ENCODE measurements at regions of chr1 and their contacts with region 1.

Region 1: DNA sequence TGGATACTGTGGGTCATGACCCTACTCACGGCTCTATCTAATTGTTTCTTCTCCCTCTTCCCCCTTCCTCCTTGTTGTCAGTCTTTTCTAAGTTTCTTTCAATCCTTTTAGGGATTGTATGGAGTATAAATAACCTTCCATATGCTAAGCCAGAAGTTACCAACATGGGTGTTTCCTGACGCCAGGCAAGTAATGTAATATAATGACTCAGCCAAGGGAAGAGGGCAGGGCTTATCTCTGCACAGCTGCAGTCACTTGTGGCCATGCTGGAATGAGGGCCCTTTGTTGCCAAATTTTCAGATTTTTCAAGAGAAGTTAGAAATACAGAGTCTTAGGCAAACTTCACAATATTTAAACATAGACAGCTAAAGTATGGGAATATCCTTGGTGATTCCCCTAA is 194.6 kb downstream of the ST6GALNAC3 start:
- DNase-seq: peak; percentile 47
- H3K4me3 Mint-ChIP-seq: no peak overlapping the region
- H3K27ac Mint-ChIP-seq: peak overlapping the region; percentile 69
- H3K4me1 Mint-ChIP-seq: peaks cover 60% of the 10 kb centered on the region
- H3K27me3 Mint-ChIP-seq: no peaks in the 10 kb centered on the region

Region 2: DNA sequence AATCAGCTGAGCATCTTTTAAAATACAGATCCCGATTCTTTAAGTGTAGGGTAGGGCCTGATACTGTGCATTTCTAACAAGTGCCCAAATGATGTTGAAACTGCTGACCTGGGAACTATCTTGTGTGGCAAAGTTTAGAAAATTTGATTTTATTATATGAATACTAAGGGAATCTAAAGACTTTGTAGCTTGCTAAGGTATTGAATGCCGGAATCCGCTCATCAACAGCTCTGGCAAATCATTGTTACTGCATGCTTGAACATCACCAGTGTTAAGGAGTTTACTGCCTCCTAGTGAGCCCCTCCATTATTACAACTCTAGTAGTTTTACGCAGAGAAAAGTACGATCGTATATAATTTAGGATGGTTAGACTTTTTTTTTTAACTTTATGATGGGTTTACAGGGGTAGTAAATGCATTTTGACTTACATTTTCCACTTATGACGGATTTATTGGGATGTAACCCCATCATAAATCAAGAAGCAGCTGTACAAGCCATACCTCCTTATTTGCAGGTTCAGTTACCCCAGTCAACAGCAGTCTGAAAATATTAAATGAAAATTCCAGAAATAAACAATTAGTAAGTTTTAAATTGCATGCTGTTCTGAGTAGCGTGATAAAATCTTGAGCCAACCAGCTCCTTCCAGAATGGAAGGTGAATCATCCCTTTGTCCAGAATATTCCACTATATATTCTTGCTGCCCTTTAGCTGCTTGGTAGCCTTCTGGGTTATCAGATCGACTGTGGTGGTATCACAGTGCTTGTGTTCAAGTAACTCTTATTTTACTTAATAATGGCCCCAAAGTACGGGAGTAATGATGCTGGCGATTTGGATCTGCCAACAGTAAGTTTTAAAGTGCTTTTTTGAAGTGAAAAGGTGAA is 1535.3 kb before region 1 on chr1:
- CTCF ChIA-PET with region 1: no interaction called
- intact Hi-C with region 1: no loop called
- DNase-seq: peak; percentile 49
- H3K4me3 Mint-ChIP-seq: peak overlapping the region; percentile 89
- H3K27ac Mint-ChIP-seq: peak overlapping the region; percentile 94
- H3K4me1 Mint-ChIP-seq: peaks cover 37% of the 10 kb centered on the region
- H3K27me3 Mint-ChIP-seq: no peaks in the 10 kb centered on the region

Region 3: DNA sequence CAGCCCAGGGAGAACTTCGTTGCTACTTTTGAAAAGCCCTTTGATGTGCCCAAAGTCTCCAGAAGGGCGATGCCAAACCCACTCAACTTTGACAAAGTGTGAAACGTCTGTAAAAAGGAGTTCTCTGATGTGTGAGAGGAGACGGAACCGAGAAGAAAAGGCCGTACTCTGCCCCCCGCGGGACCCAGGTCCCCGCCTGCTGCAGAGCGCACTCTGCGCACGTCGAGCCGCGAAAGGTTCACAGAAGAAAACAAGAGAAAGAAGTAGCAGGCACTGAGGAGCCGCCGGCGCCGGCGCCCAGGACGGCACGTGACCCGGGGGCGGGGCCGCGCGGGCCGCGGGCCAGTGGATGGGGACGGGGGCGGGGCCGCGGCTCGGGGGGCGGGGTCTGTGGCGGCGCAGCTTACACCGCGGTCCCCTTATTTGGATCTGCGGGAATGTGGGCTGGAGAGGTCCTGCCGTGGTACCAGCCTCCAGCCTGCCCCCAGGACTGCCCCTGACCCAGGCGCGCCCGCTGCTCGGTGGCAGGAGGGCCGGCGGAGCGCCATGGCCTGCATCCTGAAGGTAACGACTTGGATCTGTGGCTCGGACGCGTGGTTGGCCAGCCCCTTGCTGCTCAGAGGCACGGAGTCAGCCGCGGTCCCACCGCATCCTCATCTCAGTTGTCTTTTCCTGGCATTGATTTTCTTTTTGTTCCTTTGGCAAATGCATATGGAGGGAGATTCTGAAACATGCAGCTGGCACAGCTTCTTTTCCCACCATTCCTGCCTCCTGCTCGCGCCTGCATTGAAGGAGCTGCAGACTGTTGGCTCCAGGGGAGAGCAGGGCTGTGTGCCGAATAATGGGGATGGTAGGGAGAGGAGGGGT is 194.6 kb before region 1 on chr1 and contains the start of gene ST6GALNAC3:
- CTCF ChIA-PET with region 1: no interaction called
- intact Hi-C with region 1: loop called (anchors 5 kb)
- DNase-seq: peak; percentile 78
- H3K4me3 Mint-ChIP-seq: peak within 1 kb of the TSS; percentile 83
- H3K27ac Mint-ChIP-seq: no peak within 1 kb of the TSS
- H3K4me1 Mint-ChIP-seq: peaks cover 25% of the 10 kb centered on the region
- H3K27me3 Mint-ChIP-seq: no peaks in the 10 kb centered on the region
- total RNA-seq, gene ST6GALNAC3: 2.5 to 2.8 TPM

Region 4: GRCh38 chr1:76176020-76176419 is 93.1 kb before region 1 on chr1:
- CTCF ChIA-PET with region 1: no interaction called
- intact Hi-C with region 1: loop called (anchors 1 kb)
- DNase-seq: peak; percentile 37
- H3K4me3 Mint-ChIP-seq: no peak overlapping the region
- H3K27ac Mint-ChIP-seq: no peak overlapping the region
- H3K4me1 Mint-ChIP-seq: peaks cover 20% of the 10 kb centered on the region
- H3K27me3 Mint-ChIP-seq: no peaks in the 10 kb centered on the region

Region 5: DNA sequence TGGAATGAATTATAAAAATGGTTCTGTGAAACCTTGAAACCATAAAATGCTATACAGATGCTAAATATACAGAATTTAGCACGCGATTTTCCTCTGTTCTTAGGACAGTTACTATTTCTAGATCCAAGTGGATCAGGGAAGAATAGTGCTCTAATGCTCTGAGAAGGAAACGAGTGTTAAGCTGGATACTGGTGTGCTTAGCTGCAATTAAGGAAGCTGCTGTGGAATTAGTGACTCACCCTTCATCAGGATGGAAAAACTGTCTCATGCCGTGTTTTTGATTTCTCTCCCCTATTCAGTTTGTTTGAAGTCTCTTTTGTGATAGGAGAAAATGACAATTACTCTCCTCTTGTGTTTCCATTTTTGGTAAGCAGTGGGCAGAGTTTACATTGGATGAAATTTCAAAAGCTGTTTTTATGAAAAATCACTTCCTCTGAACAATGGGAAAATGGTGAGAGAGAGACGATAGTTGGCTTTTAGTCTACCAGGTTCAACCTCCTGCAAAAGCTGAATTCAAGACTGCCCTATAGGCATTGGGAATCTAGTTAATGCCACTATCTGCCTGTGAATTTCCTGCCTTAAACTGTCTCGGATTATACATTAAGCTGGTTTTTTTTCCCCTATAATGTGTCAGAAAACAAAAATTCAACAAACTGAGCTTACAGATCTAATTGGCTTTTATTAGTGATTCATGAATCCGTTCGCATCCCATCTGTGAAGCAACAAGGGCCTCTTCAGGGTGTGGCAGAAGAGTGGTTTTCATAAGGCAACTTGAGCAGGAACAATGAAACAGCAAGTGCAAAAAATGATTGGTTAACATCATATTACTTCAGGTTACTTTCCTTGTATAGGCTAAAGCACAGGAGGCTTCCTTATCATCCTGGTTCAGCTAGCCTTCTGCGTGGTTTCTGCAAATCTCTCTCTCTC is 14.8 kb before region 1 on chr1:
- CTCF ChIA-PET with region 1: interaction called, 3 read pairs
- intact Hi-C with region 1: loop called (anchors 1 kb)
- DNase-seq: peak; percentile 56
- H3K4me3 Mint-ChIP-seq: no peak overlapping the region
- H3K27ac Mint-ChIP-seq: peak overlapping the region; percentile 65
- H3K4me1 Mint-ChIP-seq: peaks cover 68% of the 10 kb centered on the region
- H3K27me3 Mint-ChIP-seq: no peaks in the 10 kb centered on the region

Region 6: DNA sequence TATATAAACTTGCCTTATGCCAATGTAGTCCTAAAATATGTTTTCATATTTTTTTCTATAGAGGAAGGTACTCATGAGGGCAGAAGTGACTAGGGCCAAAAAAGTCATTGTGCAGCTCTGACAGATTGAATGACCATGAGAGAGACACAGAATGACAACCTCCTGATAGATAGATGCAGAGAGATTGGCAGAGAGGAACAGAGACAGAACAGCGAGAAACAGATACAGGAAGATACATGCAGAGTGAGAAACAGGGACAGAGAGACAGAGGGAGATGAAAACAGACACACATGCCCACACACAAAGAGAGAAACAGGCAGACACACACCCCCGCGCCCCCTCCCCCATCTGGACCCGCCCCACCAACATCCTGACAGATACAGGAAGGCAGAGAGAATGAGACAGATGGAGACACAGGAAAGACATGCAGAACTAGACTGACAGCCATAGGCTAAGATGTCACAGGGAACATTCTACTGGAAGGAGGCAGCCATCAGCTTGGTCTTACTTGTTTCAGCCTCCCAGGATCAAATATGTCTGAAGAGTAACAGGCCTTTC is 16.5 kb after region 1 on chr1:
- CTCF ChIA-PET with region 1: interaction called, 4 read pairs
- intact Hi-C with region 1: loop called (anchors 1 kb)
- DNase-seq: peak; percentile 56
- H3K4me3 Mint-ChIP-seq: no peak overlapping the region
- H3K27ac Mint-ChIP-seq: peak overlapping the region; percentile 62
- H3K4me1 Mint-ChIP-seq: peaks cover 61% of the 10 kb centered on the region
- H3K27me3 Mint-ChIP-seq: no peaks in the 10 kb centered on the region

Region 7: GRCh38 chr1:77759071-77760028 is 1490.2 kb after region 1 on chr1 and contains the start of gene USP33:
- CTCF ChIA-PET with region 1: no interaction called
- intact Hi-C with region 1: loop called (anchors 10 kb)
- DNase-seq: peak; percentile 93
- H3K4me3 Mint-ChIP-seq: peak within 1 kb of the TSS; percentile 90
- H3K27ac Mint-ChIP-seq: peak within 1 kb of the TSS; percentile 93
- H3K4me1 Mint-ChIP-seq: peaks cover 46% of the 10 kb centered on the region
- H3K27me3 Mint-ChIP-seq: no peaks in the 10 kb centered on the region
- total RNA-seq, gene USP33: 32.6 to 35.6 TPM

Measured in activated naive CD4-positive, alpha-beta T cell treated with anti-CD3 and anti-CD28 coated beads for 36 hours (primary cell).